Heart left ventricle (tissue), 16 donors: ENCODE measurements at regions of chr12 and their contacts with region 1.

Region 1: GRCh38 chr12:27696864-27697564 is 767 bp downstream of the REP15 start:
- DNase-seq: no peak
- ATAC-seq: peak in 1 of 4 donors; percentile 20
- H3K4me3 ChIP-seq: no peak overlapping the region
- H3K27ac ChIP-seq: no peak overlapping the region
- H3K4me1 ChIP-seq: no peaks in the 10 kb centered on the region
- H3K27me3 ChIP-seq: no peaks in the 10 kb centered on the region
- CTCF ChIP-seq: no peak
- POLR2A ChIP-seq: no peak

Region 2: DNA sequence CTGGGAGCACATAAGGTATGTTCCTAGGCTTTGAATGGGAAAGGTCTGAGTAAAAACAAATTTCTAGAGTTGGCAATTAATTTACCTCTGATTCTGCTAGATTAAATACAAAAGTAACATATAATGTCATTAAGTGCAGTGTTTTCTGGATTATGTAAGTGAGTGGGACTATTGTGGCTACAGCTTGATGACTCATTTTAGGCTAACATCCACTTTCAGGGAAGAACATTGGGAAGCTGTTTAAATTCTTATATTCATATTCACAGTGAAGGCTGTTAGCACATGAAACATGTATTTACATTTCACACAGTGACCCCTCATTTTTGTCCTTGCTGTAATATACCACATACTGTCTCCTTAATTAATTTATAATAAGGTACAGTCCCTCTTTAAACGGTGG is 377.6 kb before region 1 on chr12:
- intact Hi-C with region 1: loop called in 1 of 10 experiments (anchors 10 kb)
- DNase-seq: no peak
- ATAC-seq: no peak
- H3K4me3 ChIP-seq: no peak overlapping the region
- H3K27ac ChIP-seq: no peak overlapping the region
- H3K4me1 ChIP-seq: no peaks in the 10 kb centered on the region
- H3K27me3 ChIP-seq: no peaks in the 10 kb centered on the region
- CTCF ChIP-seq: no peak
- POLR2A ChIP-seq: no peak